PC-3 (cell line): ENCODE measurements at regions of chr10 and their contacts with region 1.

Region 1: GRCh38 chr10:48981310-48981907 is 41.8 kb upstream of the LRRC18 start:
- DNase-seq: peak; percentile 76
- ATAC-seq: peak; percentile 94
- H3K4me3 ChIP-seq: no peak overlapping the region
- H3K27ac ChIP-seq: no peak overlapping the region
- H3K4me1 ChIP-seq: no peaks in the 10 kb centered on the region
- H3K27me3 ChIP-seq: peaks cover 42% of the 10 kb centered on the region
- CTCF ChIP-seq: peak; percentile 98

Region 2: GRCh38 chr10:48913674-48914073 is 67.7 kb before region 1 on chr10:
- CTCF ChIA-PET with region 1: no interaction called
- POLR2A ChIA-PET with region 1: no interaction called
- intact Hi-C with region 1: no loop called
- DNase-seq: no peak
- ATAC-seq: no peak
- H3K4me3 ChIP-seq: no peak overlapping the region
- H3K27ac ChIP-seq: no peak overlapping the region
- H3K4me1 ChIP-seq: no peaks in the 10 kb centered on the region
- H3K27me3 ChIP-seq: peaks cover 85% of the 10 kb centered on the region
- CTCF ChIP-seq: no peak

Region 3: DNA sequence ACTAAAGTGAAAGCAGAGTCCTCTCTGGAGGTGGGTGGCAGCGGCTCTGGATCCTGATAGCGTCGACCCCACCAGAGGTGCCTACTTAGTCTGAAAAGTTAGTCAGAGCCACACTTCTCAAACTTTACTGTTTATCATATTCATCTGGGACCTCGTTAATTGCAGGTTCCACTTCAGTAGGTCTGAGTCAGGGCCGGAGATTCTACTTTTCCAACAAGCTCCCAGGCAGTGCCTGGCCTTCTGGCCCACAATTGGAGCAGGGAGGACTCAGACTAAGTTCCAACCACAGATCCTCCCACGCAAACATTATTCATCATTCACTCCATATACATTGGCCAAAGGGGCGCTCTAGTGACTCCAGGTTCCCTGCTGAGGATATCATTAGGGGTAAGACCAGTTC is 55.8 kb after region 1 on chr10:
- CTCF ChIA-PET with region 1: interaction called, 11 read pairs
- POLR2A ChIA-PET with region 1: no interaction called
- intact Hi-C with region 1: no loop called
- DNase-seq: peak; percentile 93
- ATAC-seq: peak; percentile 38
- H3K4me3 ChIP-seq: no peak overlapping the region
- H3K27ac ChIP-seq: peak overlapping the region; percentile 14
- H3K4me1 ChIP-seq: peaks cover 7% of the 10 kb centered on the region
- H3K27me3 ChIP-seq: peaks cover 17% of the 10 kb centered on the region; the same call in 1 of the 2 replicates
- CTCF ChIP-seq: peak; percentile 43; the same call in 1 of the 2 replicates

Region 4: GRCh38 chr10:49164559-49165188 is 183.3 kb after region 1 on chr10:
- CTCF ChIA-PET with region 1: interaction called, 6 read pairs
- POLR2A ChIA-PET with region 1: no interaction called
- intact Hi-C with region 1: loop called (anchors 10 kb)
- DNase-seq: peak; percentile 60
- ATAC-seq: peak; percentile 50; the same call in 1 of the 2 replicates
- H3K4me3 ChIP-seq: no peak overlapping the region
- H3K27ac ChIP-seq: no peak overlapping the region
- H3K4me1 ChIP-seq: peaks cover 12% of the 10 kb centered on the region; the same call in 1 of the 2 replicates
- H3K27me3 ChIP-seq: peaks cover 8% of the 10 kb centered on the region; the same call in 1 of the 2 replicates
- CTCF ChIP-seq: peak; percentile 89